ENCODE measurements at regions of chr1 and their contacts with region 1.

Region 1: GRCh38 chr1:215617979-215618378 is 50.9 kb downstream of the KCTD3 start:
- DNase-seq: no peak
- H3K4me3 Mint-ChIP-seq: no peak overlapping the region
- H3K27ac Mint-ChIP-seq: peak overlapping the region; percentile 20
- H3K4me1 Mint-ChIP-seq: no peaks in the 10 kb centered on the region
- H3K27me3 Mint-ChIP-seq: no peaks in the 10 kb centered on the region
- CTCF ChIP-seq: no peak

Region 2: DNA sequence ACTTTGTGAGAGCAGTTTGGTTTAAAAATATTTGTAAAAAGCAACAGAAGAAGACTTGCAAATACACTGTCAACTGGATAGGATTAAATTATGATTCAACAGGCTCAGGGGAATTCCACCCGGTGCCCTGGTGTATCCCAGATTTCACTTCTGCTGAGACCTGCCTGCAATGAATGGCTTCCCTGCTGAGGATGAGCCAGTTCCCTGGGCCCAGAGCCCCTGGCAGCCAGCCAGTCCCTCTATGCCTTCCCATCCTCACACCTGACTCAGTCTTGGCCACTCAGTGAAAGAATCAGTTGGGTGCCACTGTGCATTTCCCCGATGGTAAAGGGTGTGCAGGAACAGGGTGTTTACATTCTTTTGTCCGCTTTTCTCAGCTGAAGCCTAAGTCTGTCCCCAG is 13.5 kb after region 1 on chr1:
- CTCF ChIA-PET with region 1: interaction called, 12 read pairs
- POLR2A ChIA-PET with region 1: interaction called, 6 read pairs
- intact Hi-C with region 1: no loop called
- DNase-seq: peak; percentile 99
- H3K4me3 Mint-ChIP-seq: peak overlapping the region; percentile 7
- H3K27ac Mint-ChIP-seq: no peak overlapping the region
- H3K4me1 Mint-ChIP-seq: peaks cover 24% of the 10 kb centered on the region
- H3K27me3 Mint-ChIP-seq: no peaks in the 10 kb centered on the region
- CTCF ChIP-seq: no peak